Activated CD4-positive, alpha-beta T cell treated with anti-CD3 and anti-CD28 coated beads, Interleukin-2, amount 10 ng/mL, durations not matched to agents 24 days and 14 days (primary cell): ENCODE measurements at regions of chr16 and their contacts with region 1.

Region 1: GRCh38 chr16:17238284-17239028 is 232.3 kb downstream of the XYLT1 start:
- DNase-seq: peak; percentile 67
- H3K4me3 Mint-ChIP-seq: peak overlapping the region; percentile 7
- H3K27ac Mint-ChIP-seq: peak overlapping the region; percentile 74
- H3K4me1 Mint-ChIP-seq: peaks cover 29% of the 10 kb centered on the region
- H3K27me3 Mint-ChIP-seq: no peaks in the 10 kb centered on the region

Region 2: GRCh38 chr16:17273142-17273561 is 34.7 kb after region 1 on chr16:
- intact Hi-C with region 1: loop called (anchors 1 kb)
- DNase-seq: peak; percentile 74
- H3K4me3 Mint-ChIP-seq: peak overlapping the region; percentile 68
- H3K27ac Mint-ChIP-seq: peak overlapping the region; percentile 71
- H3K4me1 Mint-ChIP-seq: peaks cover 44% of the 10 kb centered on the region
- H3K27me3 Mint-ChIP-seq: peaks cover 5% of the 10 kb centered on the region

Region 3: GRCh38 chr16:17343028-17343427 is 104.6 kb after region 1 on chr16:
- intact Hi-C with region 1: no loop called
- DNase-seq: peak; percentile 89
- H3K4me3 Mint-ChIP-seq: peak overlapping the region; percentile 79
- H3K27ac Mint-ChIP-seq: peak overlapping the region; percentile 91
- H3K4me1 Mint-ChIP-seq: peaks cover 72% of the 10 kb centered on the region
- H3K27me3 Mint-ChIP-seq: no peaks in the 10 kb centered on the region

Region 4: GRCh38 chr16:17544785-17545184 is 306.3 kb after region 1 on chr16:
- intact Hi-C with region 1: no loop called
- DNase-seq: peak; percentile 61
- H3K4me3 Mint-ChIP-seq: no peak overlapping the region
- H3K27ac Mint-ChIP-seq: no peak overlapping the region
- H3K4me1 Mint-ChIP-seq: no peaks in the 10 kb centered on the region
- H3K27me3 Mint-ChIP-seq: no peaks in the 10 kb centered on the region